WTC11 (cell line): ENCODE measurements at regions of chr2 and their contacts with region 1.

Region 1: DNA sequence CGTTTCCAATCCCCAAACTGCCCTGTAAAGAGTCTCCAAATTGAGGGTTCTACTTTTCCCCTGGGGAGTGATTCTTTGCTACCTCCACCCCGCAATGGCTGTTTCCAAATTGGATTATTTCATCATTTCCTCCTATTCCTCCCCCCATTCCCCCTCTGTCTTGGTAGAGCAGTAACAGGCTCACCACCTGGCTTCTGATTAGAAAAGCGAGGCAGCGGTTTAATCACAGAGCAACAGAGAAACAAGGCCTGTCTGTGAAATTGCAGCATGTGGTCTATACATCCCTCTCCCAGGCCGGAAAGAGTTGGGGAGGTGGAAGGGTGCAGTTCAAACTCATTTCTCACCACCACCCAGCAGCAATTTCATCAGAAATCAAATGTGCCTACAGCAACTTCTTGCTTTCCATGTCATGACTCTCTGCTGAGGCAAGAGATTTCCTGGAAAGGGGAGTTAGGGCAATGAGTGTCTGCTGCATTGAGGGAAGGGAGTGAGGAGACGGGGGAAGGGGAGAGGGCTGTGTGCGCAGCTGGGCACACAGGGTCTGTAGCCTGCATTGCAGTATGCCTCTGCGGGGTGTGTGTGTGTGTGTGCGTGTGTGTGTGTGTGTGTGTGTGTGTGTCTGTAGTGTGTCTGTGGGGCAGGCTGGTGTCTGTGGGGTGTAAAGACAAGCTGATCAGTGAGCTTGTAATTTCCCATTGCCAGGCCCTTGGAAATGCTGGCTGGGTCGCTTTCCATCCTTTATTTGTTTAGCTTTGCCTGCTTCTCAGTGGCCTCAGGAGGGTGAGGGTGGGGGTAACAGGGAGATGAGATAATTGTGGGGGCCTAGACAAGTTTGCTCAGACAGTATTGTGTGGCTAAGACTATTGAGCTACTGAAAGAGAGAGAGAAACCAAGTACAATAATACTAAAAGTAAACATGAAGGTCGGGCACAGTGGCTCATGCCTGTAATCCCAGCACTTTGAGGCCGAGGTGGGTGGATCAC is 13.5 kb upstream of the IGFBP2 start:
- DNase-seq: no peak
- ATAC-seq: peak; percentile 70
- H3K4me3 Mint-ChIP-seq: no peak overlapping the region
- H3K27ac Mint-ChIP-seq: peak overlapping the region; percentile 35
- H3K4me1 Mint-ChIP-seq: peaks cover 31% of the 10 kb centered on the region
- H3K27me3 Mint-ChIP-seq: no peaks in the 10 kb centered on the region; the same call in 1 of the 2 replicates
- CTCF ChIP-seq: no peak

Region 2: DNA sequence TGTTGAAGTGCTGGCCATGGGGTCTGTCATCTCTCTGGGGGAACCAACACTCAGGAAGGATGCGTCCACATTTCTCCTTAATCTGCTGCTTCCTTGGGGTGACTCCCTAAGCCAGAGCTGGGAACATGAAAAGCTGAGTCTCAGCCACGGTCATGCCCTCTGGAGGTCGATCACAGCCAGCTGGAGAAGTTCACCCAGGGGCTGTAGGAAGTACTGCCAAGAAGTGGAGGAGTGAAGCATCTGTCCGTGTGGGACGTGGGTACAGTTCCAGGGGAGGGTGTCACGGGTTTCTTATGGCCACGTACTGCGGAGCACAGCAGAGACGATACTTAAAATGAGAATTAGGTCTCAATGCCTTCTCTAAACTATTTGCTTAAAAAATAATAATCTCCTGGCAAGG is 28.9 kb before region 1 on chr2:
- CTCF ChIA-PET with region 1: interaction called, 11 read pairs
- POLR2A ChIA-PET with region 1: no interaction called
- DNase-seq: peak; percentile 26
- ATAC-seq: peak; percentile 91
- H3K4me3 Mint-ChIP-seq: no peak overlapping the region
- H3K27ac Mint-ChIP-seq: no peak overlapping the region
- H3K4me1 Mint-ChIP-seq: peaks cover 29% of the 10 kb centered on the region
- H3K27me3 Mint-ChIP-seq: no peaks in the 10 kb centered on the region
- CTCF ChIP-seq: no peak